ENCODE measurements at regions of chr2 and their contacts with region 1.

Region 1: DNA sequence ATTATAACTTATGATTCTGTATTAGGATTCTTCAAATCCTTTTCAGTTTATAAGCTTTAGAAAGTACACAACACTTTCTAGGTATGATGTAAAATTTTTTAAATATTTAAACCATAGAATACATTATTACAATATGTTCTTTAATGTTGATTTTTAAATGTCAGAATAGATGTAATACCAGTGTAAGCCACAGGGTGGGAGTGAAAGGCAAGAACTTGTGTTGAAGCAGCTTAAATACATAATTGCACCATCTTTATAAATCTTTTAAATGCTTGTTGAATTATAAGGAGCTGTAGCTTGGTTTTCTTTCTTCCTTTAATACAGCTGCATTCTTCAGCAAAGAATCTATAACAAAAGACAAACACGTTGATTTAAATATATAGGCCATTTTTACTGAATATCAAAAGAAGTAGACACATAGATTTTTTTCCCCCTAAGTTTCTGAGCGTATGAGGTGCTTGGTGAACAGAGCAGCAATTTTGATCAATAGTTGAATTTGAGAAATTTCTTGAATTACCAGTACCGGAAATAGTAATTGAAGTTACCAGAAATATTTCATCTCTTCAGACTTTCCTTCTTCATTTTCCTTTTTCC is 63.0 kb downstream of the TANK start:
- DNase-seq: peak; percentile 37
- ATAC-seq: no peak
- H3K4me3 ChIP-seq: no peak overlapping the region
- H3K27ac ChIP-seq: no peak overlapping the region
- H3K4me1 ChIP-seq: no peaks in the 10 kb centered on the region
- H3K27me3 ChIP-seq: no peaks in the 10 kb centered on the region
- CTCF ChIP-seq: peak; percentile 39 to 65 (median 47); a peak in 4 of 6 replicates
- POLR2A ChIP-seq: no peak
- RAD21 ChIP-seq: peak; percentile 61

Region 2: GRCh38 chr2:161233858-161234431 is 10.7 kb after region 1 on chr2:
- CTCF ChIA-PET with region 1: interaction called, 19 read pairs
- POLR2A ChIA-PET with region 1: interaction called, 3 read pairs
- RAD21 ChIA-PET with region 1: no interaction called
- intact Hi-C with region 1: no loop called
- DNase-seq: no peak
- ATAC-seq: no peak
- H3K4me3 ChIP-seq: no peak overlapping the region
- H3K27ac ChIP-seq: no peak overlapping the region
- H3K4me1 ChIP-seq: no peaks in the 10 kb centered on the region
- H3K27me3 ChIP-seq: no peaks in the 10 kb centered on the region
- CTCF ChIP-seq: no peak
- POLR2A ChIP-seq: no peak
- RAD21 ChIP-seq: no peak

Measured in HCT116 (cell line).